ENCODE measurements at regions of chr10 and their contacts with region 1.

Region 1: GRCh38 chr10:102009801-102010425 is 46.1 kb downstream of the ARMH3 start:
- DNase-seq: peak; percentile 87
- H3K4me3 ChIP-seq: no peak overlapping the region
- H3K27ac ChIP-seq: no peak overlapping the region
- H3K27me3 ChIP-seq: no peaks in the 10 kb centered on the region
- CTCF ChIP-seq: peak; percentile 100

Region 2: DNA sequence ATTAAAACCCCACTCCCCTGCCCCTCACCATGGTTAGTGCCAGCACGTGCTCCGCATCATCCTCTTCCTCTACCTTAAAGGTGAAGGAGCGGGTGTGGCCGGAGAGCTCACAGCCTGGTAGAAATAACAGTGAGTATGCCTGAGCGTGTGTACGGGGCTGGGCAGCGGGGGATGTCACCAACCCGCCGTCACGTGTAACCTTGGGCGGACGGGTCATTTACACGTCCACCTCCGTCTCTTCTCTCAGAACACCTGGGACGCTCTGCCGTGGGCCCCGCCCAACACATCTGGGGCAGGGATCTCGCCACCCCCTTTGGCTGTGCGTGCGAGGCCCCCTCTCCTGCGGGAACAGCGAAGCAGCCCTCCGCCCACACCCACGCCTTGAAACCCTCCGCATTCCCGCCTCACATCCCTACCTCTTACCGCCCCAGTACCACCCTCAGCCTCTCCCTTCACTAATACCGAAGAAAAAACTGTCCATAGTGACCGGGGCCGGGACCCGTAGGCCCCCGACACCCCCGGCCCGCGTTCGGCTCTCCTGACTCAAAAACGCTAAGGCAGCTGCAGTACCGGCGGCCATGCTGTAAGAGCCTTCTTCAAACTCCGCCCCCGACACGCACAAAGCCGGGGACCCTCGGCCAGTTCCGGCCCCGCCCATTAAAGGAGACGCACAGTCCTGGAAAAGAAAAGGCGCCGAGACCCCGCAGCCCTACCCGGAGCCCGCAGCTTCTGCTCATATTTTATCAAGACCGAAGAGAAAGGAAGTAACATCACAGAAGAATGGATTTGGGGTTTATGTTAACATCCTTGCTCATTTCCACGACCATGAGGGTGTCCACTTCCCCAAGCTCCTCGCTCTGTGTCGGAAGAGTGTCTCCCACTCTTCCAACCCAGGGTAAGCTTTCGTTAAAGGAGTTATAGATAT is 226.8 kb before region 1 on chr10 and contains the start of gene NPM3:
- CTCF ChIA-PET with region 1: interaction called, 13 read pairs
- POLR2A ChIA-PET with region 1: no interaction called
- DNase-seq: peak; percentile 29
- H3K4me3 ChIP-seq: peak within 1 kb of the TSS; percentile 94
- H3K27ac ChIP-seq: peak within 1 kb of the TSS; percentile 25
- H3K27me3 ChIP-seq: peaks cover 10% of the 10 kb centered on the region
- CTCF ChIP-seq: no peak
- polyA plus RNA-seq, gene NPM3: 31.5 and 41.5 TPM in 2 replicates

Region 3: GRCh38 chr10:101858723-101859500 is 151.0 kb before region 1 on chr10:
- CTCF ChIA-PET with region 1: interaction called, 12 read pairs
- POLR2A ChIA-PET with region 1: no interaction called
- DNase-seq: no peak
- H3K4me3 ChIP-seq: no peak overlapping the region
- H3K27ac ChIP-seq: no peak overlapping the region
- H3K27me3 ChIP-seq: no peaks in the 10 kb centered on the region
- CTCF ChIP-seq: no peak

Region 4: GRCh38 chr10:101889256-101890210 is 120.4 kb before region 1 on chr10:
- CTCF ChIA-PET with region 1: interaction called, 244 read pairs
- POLR2A ChIA-PET with region 1: no interaction called
- DNase-seq: peak; percentile 61
- H3K4me3 ChIP-seq: no peak overlapping the region
- H3K27ac ChIP-seq: no peak overlapping the region
- H3K27me3 ChIP-seq: no peaks in the 10 kb centered on the region
- CTCF ChIP-seq: peak; percentile 97

Region 5: GRCh38 chr10:101941871-101942270 is 68.0 kb before region 1 on chr10:
- CTCF ChIA-PET with region 1: interaction called, 16 read pairs
- POLR2A ChIA-PET with region 1: no interaction called
- DNase-seq: no peak
- H3K4me3 ChIP-seq: no peak overlapping the region
- H3K27ac ChIP-seq: no peak overlapping the region
- H3K27me3 ChIP-seq: no peaks in the 10 kb centered on the region
- CTCF ChIP-seq: no peak

Region 6: DNA sequence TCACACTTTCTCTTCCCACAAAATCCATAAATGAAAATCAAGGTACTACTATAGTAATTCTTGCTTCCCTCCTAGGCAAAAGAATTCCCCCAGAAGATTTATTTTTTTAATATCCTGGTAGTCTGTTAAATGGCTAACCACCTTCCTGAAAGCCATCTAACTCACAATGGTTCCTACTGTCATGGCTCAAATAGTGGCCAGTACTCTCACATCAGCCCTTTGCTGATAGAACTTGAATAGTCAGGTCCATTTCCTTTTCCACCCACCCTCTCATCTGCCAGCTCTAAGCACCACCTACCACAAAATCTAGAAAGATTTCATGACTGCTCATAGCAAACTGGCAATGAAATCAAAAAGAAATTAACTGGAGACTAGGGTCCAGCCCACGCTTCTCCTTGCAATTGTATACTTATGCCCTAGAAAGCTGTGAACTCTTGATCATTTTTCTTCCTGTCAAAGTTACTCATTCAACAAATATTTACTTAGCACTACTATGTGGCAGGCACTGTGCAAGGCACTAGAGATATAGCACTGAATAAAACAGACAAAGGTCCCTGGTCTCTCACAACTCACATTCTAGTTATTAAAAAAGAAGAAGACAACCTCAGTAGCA is 14.4 kb before region 1 on chr10:
- CTCF ChIA-PET with region 1: interaction called, 27 read pairs
- POLR2A ChIA-PET with region 1: no interaction called
- DNase-seq: no peak
- H3K4me3 ChIP-seq: no peak overlapping the region
- H3K27ac ChIP-seq: peak overlapping the region; percentile 25
- H3K27me3 ChIP-seq: no peaks in the 10 kb centered on the region
- CTCF ChIP-seq: no peak

Region 7: DNA sequence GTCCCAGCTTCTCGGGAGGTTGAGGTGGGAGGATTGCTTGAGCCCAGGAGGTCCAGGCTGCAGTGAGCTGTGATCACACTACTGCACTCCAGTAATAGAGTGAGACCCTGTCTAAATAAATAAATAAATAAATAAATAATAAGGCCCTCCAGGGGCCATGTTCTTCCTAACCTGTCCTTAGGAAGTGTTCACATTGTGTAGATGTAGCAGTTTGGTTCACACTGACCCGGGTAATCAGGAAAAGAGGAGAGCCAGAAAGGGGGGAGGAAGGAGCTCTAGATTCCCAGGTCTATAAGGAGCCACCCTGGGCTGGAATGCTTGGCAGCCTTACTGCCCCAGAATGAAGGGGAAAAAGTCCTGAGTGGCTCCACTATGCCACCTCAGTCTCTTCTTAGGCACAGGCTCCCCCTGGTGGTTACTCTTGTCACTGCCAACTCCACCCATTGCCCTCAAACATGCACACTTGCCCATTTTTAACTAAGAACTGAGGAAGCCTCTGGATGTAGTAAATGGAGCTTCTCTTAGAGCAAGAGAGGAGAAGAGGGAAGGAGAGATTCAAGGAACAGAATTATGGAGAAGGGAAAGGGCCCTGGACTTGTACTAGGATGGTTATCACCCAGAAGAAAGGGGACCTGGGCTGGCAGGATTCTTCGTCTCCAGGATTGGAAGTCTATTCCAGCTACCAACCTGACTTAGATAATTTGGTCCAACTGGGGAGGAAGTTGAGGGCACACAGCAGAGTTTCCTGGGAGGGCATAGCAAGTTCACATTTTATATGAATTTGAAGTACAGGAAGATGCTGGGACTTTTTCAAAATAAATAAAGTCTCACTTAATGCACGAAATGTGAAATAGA is 63.0 kb after region 1 on chr10:
- CTCF ChIA-PET with region 1: interaction called, 51 read pairs
- POLR2A ChIA-PET with region 1: no interaction called
- DNase-seq: peak; percentile 59
- H3K4me3 ChIP-seq: no peak overlapping the region
- H3K27ac ChIP-seq: no peak overlapping the region
- H3K27me3 ChIP-seq: no peaks in the 10 kb centered on the region
- CTCF ChIP-seq: peak; percentile 97

Region 8: GRCh38 chr10:102504221-102504975 is 494.5 kb after region 1 on chr10:
- CTCF ChIA-PET with region 1: no interaction called
- POLR2A ChIA-PET with region 1: no interaction called
- DNase-seq: no peak
- H3K4me3 ChIP-seq: peak overlapping the region; percentile 90
- H3K27ac ChIP-seq: peak overlapping the region; percentile 39
- H3K27me3 ChIP-seq: no peaks in the 10 kb centered on the region
- CTCF ChIP-seq: no peak

Measured in AG04450 (cell line).